ENCODE measurements at regions of chr2 and their contacts with region 1.

Region 1: DNA sequence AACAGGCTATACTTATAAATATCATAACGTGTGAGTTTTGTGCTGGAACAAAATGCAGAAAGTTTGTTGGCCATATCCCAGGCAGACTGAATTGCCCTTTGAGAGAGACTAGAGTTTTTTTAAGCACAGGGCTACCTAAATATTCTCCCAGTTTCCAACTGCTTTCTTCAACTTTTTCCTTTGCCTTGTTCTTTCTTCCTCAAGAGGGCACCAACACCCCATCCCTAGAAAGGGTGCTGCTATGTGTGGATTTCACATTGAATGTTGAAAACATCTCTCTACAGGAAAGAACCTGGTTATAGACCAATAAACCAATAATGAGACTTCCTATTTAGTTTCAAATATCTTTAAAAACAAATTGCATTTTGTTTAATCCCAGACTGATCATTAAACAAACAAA is 87.9 kb downstream of the ICOS start:
- DNase-seq: no peak
- H3K4me3 Mint-ChIP-seq: no peak overlapping the region
- H3K27ac Mint-ChIP-seq: peak overlapping the region; percentile 32
- H3K4me1 Mint-ChIP-seq: peaks cover 75% of the 10 kb centered on the region
- H3K27me3 Mint-ChIP-seq: no peaks in the 10 kb centered on the region

Region 2: GRCh38 chr2:203763938-203764664 is 260.4 kb before region 1 on chr2:
- intact Hi-C with region 1: loop called (anchors 1 kb)
- DNase-seq: peak; percentile 20
- H3K4me3 Mint-ChIP-seq: peak overlapping the region; percentile 22
- H3K27ac Mint-ChIP-seq: peak overlapping the region; percentile 95
- H3K4me1 Mint-ChIP-seq: peaks cover 66% of the 10 kb centered on the region
- H3K27me3 Mint-ChIP-seq: no peaks in the 10 kb centered on the region

Region 3: DNA sequence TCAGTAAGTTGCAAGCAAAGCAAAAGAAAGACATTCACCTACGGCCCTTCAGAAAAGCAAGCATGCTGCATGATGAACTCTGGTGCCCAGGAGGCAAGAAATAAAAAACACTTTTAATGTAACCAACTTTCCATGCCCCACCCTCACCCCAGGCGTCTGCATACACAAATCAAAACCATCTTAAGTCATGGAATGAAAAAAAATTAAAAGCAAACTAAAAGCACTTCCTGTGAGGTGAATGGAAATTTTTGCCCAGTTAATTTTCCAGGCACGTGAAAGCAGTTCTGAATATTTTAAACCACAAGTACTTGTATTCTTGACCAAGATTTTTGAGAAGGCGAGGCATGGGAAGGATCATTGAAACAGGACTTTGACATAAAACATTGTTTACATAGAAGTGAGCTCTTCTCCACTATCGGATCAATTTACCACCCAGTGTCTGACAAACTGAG is 90.4 kb before region 1 on chr2:
- intact Hi-C with region 1: loop called (anchors 1 kb)
- DNase-seq: peak; percentile 39
- H3K4me3 Mint-ChIP-seq: peak overlapping the region; percentile 73
- H3K27ac Mint-ChIP-seq: peak overlapping the region; percentile 93
- H3K4me1 Mint-ChIP-seq: peaks cover 59% of the 10 kb centered on the region
- H3K27me3 Mint-ChIP-seq: no peaks in the 10 kb centered on the region

Region 4: GRCh38 chr2:203989521-203989920 is 35.0 kb before region 1 on chr2:
- intact Hi-C with region 1: loop called (anchors 1 kb)
- DNase-seq: no peak
- H3K4me3 Mint-ChIP-seq: peak overlapping the region; percentile 3
- H3K27ac Mint-ChIP-seq: peak overlapping the region; percentile 78
- H3K4me1 Mint-ChIP-seq: peaks cover 37% of the 10 kb centered on the region
- H3K27me3 Mint-ChIP-seq: no peaks in the 10 kb centered on the region

Region 5: DNA sequence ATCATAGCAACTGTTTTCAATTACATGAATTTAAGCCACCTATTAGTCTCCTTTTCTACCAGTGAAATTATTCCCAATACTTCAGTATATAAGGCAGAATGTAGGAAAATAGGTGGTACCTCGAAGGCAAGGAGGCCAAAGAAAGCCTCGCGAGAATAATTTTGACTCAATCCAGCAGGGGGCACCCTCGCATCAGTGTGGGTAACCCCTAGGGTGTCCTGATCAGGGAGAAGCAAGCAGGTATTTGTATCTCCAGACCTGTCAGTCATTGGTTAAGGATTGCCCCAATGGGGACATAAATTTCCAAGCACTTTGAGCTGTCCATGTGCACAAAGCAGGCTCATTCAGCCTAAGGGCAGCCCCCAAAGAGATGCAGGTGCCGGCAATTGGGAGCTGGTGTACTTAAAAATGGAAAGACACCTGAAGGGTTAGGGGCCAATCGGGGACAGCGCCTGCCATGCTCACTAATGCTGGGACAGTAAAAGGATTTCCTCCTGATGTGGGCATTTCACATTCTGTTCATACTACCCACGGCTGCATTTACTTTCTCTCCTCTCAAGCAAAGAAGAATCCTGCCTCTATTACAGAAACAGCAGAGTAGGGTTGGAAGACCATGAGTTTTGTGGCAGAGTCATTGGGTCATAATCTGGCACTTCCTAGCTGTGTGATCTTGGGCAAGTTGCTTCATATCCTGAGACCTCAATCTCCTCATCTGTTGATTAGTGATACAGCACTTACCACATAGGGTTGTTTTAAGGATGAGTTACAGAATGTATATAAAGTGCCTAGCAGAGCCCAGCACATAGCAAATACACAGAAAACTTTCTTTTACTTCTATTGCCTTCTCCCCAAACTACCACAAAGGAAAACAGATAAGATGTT is 48.2 kb after region 1 on chr2:
- intact Hi-C with region 1: loop called (anchors 2 kb)
- DNase-seq: peak; percentile 44
- H3K4me3 Mint-ChIP-seq: no peak overlapping the region
- H3K27ac Mint-ChIP-seq: no peak overlapping the region
- H3K4me1 Mint-ChIP-seq: peaks cover 13% of the 10 kb centered on the region
- H3K27me3 Mint-ChIP-seq: no peaks in the 10 kb centered on the region

Region 6: GRCh38 chr2:204691911-204692510 is 667.5 kb after region 1 on chr2:
- intact Hi-C with region 1: loop called (anchors 1 kb)
- DNase-seq: no peak
- H3K4me3 Mint-ChIP-seq: no peak overlapping the region
- H3K27ac Mint-ChIP-seq: no peak overlapping the region
- H3K4me1 Mint-ChIP-seq: peaks cover 11% of the 10 kb centered on the region
- H3K27me3 Mint-ChIP-seq: peaks cover 3% of the 10 kb centered on the region

Region 7: DNA sequence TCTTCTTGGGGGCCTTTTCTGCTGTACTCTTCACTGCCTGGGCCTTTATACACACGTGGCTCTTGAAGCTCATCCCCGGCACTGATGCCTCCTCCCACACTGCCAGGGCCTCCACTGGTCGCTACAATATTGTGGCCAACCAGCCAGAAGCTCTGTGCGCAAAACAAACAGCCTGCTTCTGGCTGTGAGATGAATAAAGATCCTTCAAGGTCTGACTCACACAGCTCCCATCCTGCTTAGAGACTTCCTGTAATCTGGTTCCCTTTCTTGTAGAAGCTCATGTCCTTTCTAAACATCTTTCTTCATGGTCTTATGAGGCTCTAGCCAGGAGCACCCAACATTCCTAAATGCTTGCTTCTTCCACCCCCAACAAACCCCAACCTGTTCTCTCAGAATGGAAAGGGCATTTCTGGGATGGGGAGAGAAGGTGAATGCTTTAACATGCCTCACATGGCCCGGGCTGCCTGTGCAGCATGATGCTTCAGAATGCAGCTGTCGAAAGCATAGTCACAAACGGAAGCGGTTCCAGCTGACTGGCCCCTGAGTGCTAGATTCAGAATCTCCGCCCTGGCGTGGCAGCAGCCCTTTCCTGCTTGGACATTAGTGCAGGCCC is 1682.4 kb after region 1 on chr2:
- intact Hi-C with region 1: loop called (anchors 10 kb)
- DNase-seq: peak; percentile 35
- H3K4me3 Mint-ChIP-seq: peak overlapping the region; percentile 46
- H3K27ac Mint-ChIP-seq: peak overlapping the region; percentile 97
- H3K4me1 Mint-ChIP-seq: peaks cover 50% of the 10 kb centered on the region
- H3K27me3 Mint-ChIP-seq: no peaks in the 10 kb centered on the region